GM10248 (cell line): ENCODE measurements at regions of chr17 and their contacts with region 1.

Region 1: GRCh38 chr17:28057731-28058279 is 15.3 kb downstream of the NLK start:
- DNase-seq: peak; percentile 64
- CTCF ChIP-seq: no peak

Region 2: GRCh38 chr17:28018439-28019070 is 39.2 kb before region 1 on chr17:
- CTCF ChIA-PET with region 1: no interaction called
- POLR2A ChIA-PET with region 1: no interaction called
- DNase-seq: no peak
- CTCF ChIP-seq: no peak

Region 3: GRCh38 chr17:28041068-28041843 is 16.5 kb before region 1 on chr17:
- CTCF ChIA-PET with region 1: interaction called, 26 read pairs
- POLR2A ChIA-PET with region 1: interaction called, 9 read pairs
- DNase-seq: peak; percentile 99
- CTCF ChIP-seq: no peak

Region 4: DNA sequence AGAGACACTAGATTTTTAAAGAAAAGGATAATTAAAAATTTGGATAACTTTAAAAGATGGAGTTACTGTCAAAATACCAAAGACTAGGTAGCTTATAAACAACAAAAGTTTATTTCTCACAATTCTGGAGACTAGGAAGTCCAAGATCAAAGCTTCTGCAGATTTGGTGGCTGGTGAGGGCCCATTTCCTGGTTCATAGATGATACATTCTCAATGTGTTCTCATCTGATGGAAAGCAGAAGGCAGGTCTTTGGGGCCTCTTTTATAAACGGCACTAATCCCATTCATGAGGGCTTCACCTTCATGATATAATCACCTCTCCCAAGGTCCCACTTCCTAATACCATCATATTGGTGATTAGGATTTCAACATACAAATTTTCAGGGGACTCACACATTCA is 18.3 kb after region 1 on chr17:
- CTCF ChIA-PET with region 1: interaction called, 20 read pairs
- POLR2A ChIA-PET with region 1: no interaction called
- DNase-seq: no peak
- CTCF ChIP-seq: no peak